ENCODE measurements at regions of chr10 and their contacts with region 1.

Region 1: DNA sequence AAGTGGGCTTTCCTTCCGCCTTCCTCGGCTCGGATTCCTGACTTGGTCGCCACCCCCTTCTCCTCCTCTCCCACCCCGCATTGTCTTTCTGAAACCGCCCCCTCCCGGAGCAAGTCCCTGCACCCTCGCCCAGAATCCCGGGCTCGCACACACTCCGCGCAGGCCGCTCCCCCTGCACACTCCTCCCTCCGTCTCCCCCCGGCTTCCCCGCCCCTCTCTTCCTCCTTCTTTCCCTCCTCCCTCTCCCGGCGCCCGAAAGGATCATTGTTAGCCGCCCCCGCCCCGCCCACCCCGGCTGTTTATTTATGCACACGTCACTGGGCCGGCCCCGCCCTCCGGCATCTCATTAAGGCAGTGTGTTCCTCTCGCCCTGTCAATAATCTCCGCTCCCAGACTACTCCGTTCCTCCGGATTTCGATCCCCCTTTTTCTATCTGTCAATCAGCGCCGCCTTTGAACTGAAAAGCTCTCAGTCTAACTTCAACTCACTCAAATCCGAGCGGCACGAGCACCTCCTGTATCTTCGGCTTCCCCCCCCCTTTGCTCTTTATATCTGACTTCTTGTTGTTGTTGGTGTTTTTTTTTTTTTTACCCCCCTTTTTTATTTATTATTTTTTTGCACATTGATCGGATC is at the start of gene TCF7L2:
- DNase-seq: peak; percentile 96 to 98
- ATAC-seq: peak; percentile 78
- total RNA-seq, gene TCF7L2: 114 to 118 TPM

Region 2: GRCh38 chr10:113093188-113094113 is 143.5 kb after region 1 on chr10:
- intact Hi-C with region 1: loop called in 1 of 2 experiments (anchors 10 kb)
- DNase-seq: peak; percentile 43 to 54
- ATAC-seq: peak; percentile 82

Region 3: DNA sequence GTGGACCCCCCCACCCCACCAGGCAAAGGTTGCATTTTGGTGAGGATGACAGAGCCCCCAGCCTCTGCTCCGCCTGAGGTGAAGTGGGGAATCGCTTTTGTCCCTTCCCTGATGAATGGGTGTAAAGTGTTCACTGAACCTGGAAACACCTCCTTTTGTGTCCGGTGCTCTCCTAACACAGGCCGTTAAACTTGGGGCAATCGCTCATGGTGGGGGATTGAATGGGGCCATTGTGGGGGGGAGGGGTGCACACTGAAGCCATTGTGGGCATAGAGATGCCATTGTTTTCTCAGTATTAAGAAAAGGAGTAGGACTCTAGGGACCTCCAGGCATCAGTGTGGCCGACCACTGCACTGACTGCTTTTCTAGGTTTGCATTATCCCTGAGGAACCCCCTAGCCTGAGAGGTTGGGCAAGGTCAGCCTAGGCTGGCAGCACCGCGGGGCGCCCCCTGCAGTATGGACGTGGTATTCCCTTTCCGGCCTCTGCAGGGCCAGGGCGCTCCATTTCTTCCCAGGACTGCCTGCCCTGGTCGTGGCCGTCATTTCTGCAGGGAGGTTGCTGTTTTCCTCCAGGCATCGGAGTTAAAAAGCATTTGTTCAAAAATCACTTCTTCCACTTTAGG is 158.3 kb after region 1 on chr10:
- intact Hi-C with region 1: no loop called
- DNase-seq: no peak
- ATAC-seq: peak; percentile 30

Region 4: GRCh38 chr10:113126229-113127201 is 176.5 kb after region 1 on chr10:
- intact Hi-C with region 1: loop called in 1 of 2 experiments (anchors 10 kb)
- DNase-seq: peak; percentile 62 to 72
- ATAC-seq: peak; percentile 99